Astrocyte of the cerebellum (primary cell): ENCODE measurements at regions of chr6 and their contacts with region 1.

Region 1: GRCh38 chr6:45187836-45188235 is 140.3 kb upstream of the RUNX2 start:
- DNase-seq: no peak
- H3K4me3 ChIP-seq: no peak overlapping the region
- CTCF ChIP-seq: no peak

Region 2: DNA sequence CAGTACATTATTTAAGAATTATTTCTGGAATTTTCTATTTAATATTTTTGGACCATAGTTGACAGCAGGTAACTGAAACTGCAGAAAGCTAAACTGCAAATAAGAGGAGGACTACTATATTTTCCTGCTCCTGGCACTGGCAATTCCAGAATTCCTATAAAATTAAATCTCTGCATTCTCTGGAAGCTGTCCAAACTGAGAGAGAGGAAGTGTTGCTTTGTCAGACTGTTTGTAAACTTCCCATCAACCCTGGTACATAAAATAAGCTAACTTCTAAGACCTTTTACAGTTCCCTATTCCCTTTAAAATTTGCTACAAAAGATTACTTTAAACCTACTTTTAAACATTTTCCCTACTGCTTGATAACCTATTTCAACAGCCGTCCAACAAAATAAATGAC is 55.8 kb before region 1 on chr6:
- in situ Hi-C with region 1: no loop called
- DNase-seq: no peak
- H3K4me3 ChIP-seq: no peak overlapping the region
- CTCF ChIP-seq: no peak

Region 3: DNA sequence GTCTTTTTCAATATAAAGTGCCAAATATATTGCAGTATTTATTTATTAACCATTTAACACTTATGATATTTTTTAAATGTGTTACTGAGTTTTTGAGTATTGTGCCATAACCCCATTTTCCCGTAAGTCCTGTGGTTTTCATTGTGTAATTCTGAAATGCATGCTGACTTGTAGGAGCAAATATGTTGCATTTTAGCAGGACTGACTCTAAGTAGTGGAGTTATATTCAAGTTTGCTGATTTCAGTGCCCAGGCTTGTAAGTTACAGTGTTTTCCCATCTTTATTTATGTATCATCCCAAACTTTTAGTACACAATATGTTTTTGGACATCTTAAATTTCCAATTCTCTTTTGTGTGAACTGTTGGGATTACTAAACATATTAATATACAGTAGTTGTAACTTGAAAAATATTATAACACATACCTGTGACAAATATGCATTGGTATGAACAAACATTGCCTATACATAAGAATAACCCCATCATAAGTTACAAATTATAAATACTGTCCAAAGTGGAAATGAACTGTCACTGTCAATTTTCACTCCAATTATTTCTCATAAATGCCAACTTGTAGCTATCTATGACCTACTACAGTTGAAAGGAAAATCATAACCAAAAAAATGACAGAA is 39.0 kb before region 1 on chr6:
- in situ Hi-C with region 1: no loop called
- DNase-seq: peak; percentile 1
- H3K4me3 ChIP-seq: no peak overlapping the region
- CTCF ChIP-seq: no peak

Region 4: DNA sequence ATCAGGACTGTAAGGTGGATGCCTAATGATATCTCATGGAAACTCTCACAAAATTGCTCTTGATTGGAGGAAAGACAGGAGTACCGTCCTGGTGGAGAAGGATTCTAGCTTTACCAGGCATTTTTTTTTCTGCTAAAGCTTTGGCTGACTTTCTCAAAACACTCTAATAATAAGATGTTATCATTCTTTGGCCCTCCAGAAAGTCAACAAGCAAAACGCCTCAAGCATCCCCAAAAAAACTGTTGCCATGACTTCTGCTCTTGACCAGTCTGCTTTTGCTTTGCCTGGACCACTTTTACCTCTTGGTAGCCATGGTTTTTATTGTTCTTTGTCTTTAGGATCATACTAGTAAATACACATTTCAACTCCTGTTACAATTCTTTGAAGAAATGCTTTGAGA is 84.8 kb after region 1 on chr6:
- in situ Hi-C with region 1: loop called (anchors 5 kb)
- DNase-seq: no peak
- H3K4me3 ChIP-seq: no peak overlapping the region
- CTCF ChIP-seq: no peak